Mammary epithelial cell (primary cell): ENCODE measurements at regions of chr4 and their contacts with region 1.

Region 1: GRCh38 chr4:90293320-90293719 is 166.1 kb downstream of the CCSER1 start:
- DNase-seq: no peak
- H3K4me3 ChIP-seq: no peak overlapping the region
- H3K27ac ChIP-seq: no peak overlapping the region
- H3K4me1 ChIP-seq: no peaks in the 10 kb centered on the region
- H3K27me3 ChIP-seq: peaks cover 3% of the 10 kb centered on the region
- CTCF ChIP-seq: peak; percentile 36 to 51

Region 2: GRCh38 chr4:89949782-89950387 is 343.4 kb before region 1 on chr4:
- CTCF ChIA-PET with region 1: no interaction called
- dilution Hi-C with region 1: no loop called
- in situ Hi-C with region 1: no loop called
- intact Hi-C with region 1: loop called (anchors 2 kb)
- DNase-seq: no peak
- H3K4me3 ChIP-seq: no peak overlapping the region
- H3K27ac ChIP-seq: no peak overlapping the region
- H3K4me1 ChIP-seq: no peaks in the 10 kb centered on the region
- H3K27me3 ChIP-seq: no peaks in the 10 kb centered on the region
- CTCF ChIP-seq: peak; percentile 40 to 60

Region 3: GRCh38 chr4:90012918-90013317 is 280.4 kb before region 1 on chr4:
- CTCF ChIA-PET with region 1: no interaction called
- dilution Hi-C with region 1: no loop called
- in situ Hi-C with region 1: loop called in 1 of 2 experiments (anchors 10 kb)
- intact Hi-C with region 1: no loop called
- DNase-seq: no peak
- H3K4me3 ChIP-seq: no peak overlapping the region
- H3K27ac ChIP-seq: no peak overlapping the region
- H3K4me1 ChIP-seq: no peaks in the 10 kb centered on the region
- H3K27me3 ChIP-seq: peaks cover 2% of the 10 kb centered on the region
- CTCF ChIP-seq: no peak

Region 4: DNA sequence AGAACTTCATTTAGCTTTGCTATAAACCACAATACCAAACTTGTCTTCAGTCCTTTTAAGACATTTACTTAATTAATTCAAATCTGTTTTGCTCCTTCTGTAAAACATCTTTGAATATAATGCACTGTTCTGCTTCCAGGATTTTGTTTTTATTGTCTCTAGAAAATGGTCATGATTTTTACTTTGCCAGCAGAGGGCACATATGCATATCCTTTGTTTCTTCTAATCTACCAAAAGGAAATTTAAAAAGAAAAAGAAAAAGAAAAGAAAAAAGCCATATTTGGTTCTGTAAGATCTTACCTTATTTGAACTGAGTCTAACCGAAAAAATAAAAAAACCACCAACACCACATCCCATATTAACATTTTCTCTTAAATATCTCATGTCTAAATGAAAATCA is 268.1 kb before region 1 on chr4:
- CTCF ChIA-PET with region 1: no interaction called
- dilution Hi-C with region 1: no loop called
- in situ Hi-C with region 1: loop called in 1 of 2 experiments (anchors 25 kb)
- intact Hi-C with region 1: loop called (anchors 2 kb)
- DNase-seq: peak; percentile 9
- H3K4me3 ChIP-seq: no peak overlapping the region
- H3K27ac ChIP-seq: no peak overlapping the region
- H3K4me1 ChIP-seq: no peaks in the 10 kb centered on the region
- H3K27me3 ChIP-seq: no peaks in the 10 kb centered on the region
- CTCF ChIP-seq: peak; percentile 13 to 47

Region 5: GRCh38 chr4:90624781-90625180 is 331.5 kb after region 1 on chr4:
- CTCF ChIA-PET with region 1: no interaction called
- dilution Hi-C with region 1: no loop called
- in situ Hi-C with region 1: no loop called
- intact Hi-C with region 1: no loop called
- DNase-seq: no peak
- H3K4me3 ChIP-seq: no peak overlapping the region
- H3K27ac ChIP-seq: no peak overlapping the region
- H3K4me1 ChIP-seq: no peaks in the 10 kb centered on the region
- H3K27me3 ChIP-seq: no peaks in the 10 kb centered on the region
- CTCF ChIP-seq: no peak